AG04450 (cell line): ENCODE measurements at regions of chr17 and their contacts with region 1.

Region 1: GRCh38 chr17:64129764-64130558 is at the start of gene ERN1:
- DNase-seq: peak; percentile 82
- H3K4me3 ChIP-seq: peak within 1 kb of the TSS; percentile 68
- H3K27ac ChIP-seq: peak within 1 kb of the TSS; percentile 93
- H3K27me3 ChIP-seq: no peaks in the 10 kb centered on the region
- CTCF ChIP-seq: no peak
- polyA plus RNA-seq, gene ERN1: 4.5 and 4.7 TPM in 2 replicates

Region 2: DNA sequence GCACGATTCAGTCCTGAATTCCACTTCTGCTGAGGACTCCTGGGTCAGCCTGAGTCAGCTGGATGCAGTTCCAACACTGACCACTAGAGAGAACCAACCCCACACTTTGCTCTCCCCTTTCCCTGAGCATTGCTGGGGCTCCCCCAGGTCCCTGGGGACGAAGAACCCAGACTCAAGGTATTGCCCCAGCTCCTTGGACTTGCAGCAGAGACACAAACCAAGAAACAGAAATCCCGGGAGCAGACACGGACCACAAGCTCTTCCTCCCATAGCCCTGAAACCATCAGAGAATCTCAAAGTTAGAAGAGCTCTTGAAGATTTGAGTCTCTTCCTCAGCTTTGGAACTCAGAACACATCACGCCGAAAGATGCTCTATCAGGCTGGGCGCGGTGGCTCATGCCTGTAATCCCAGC is 210.6 kb before region 1 on chr17:
- CTCF ChIA-PET with region 1: interaction called, 34 read pairs
- POLR2A ChIA-PET with region 1: no interaction called
- DNase-seq: peak; percentile 15
- H3K4me3 ChIP-seq: no peak overlapping the region
- H3K27ac ChIP-seq: no peak overlapping the region
- H3K27me3 ChIP-seq: peaks cover 20% of the 10 kb centered on the region
- CTCF ChIP-seq: peak; percentile 94

Region 3: DNA sequence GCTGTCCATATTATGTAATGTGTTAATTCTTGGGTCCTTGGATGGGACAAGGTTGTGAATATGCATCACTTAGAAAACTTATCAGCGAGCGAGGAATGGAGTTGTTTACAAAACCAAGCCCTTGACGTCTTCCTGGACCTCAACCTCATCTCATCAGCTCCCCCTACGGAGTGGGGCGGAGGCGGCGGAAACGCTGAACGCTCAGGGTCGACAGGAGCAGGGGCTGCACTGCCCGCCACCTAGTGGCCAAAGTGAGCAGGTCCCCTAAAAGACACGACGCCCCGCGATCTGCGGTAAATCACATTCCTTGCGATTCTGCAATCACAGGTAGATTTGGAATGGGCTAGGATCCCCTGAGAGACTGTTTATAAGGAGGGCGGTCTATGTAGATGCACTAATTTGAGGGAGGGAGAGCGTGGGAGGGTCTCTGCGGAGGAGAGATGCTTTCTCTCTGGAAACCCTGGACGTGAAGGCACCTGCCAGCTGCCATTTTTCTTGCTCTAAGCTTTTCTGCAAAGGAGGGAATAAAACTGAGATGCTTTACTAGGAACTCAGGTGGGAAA is 104.1 kb before region 1 on chr17:
- CTCF ChIA-PET with region 1: interaction called, 698 read pairs
- POLR2A ChIA-PET with region 1: interaction called, 11 read pairs
- DNase-seq: peak; percentile 33
- H3K4me3 ChIP-seq: no peak overlapping the region
- H3K27ac ChIP-seq: no peak overlapping the region
- H3K27me3 ChIP-seq: peaks cover 2% of the 10 kb centered on the region
- CTCF ChIP-seq: peak; percentile 93

Region 4: GRCh38 chr17:64056269-64057005 is 73.5 kb before region 1 on chr17:
- CTCF ChIA-PET with region 1: interaction called, 92 read pairs
- POLR2A ChIA-PET with region 1: no interaction called
- DNase-seq: no peak
- H3K4me3 ChIP-seq: no peak overlapping the region
- H3K27ac ChIP-seq: no peak overlapping the region
- H3K27me3 ChIP-seq: no peaks in the 10 kb centered on the region
- CTCF ChIP-seq: no peak

Region 5: GRCh38 chr17:64117981-64118979 is 11.7 kb before region 1 on chr17:
- CTCF ChIA-PET with region 1: interaction called, 10 read pairs
- POLR2A ChIA-PET with region 1: interaction called, 16 read pairs
- DNase-seq: no peak
- H3K4me3 ChIP-seq: no peak overlapping the region
- H3K27ac ChIP-seq: no peak overlapping the region
- H3K27me3 ChIP-seq: no peaks in the 10 kb centered on the region
- CTCF ChIP-seq: no peak

Region 6: DNA sequence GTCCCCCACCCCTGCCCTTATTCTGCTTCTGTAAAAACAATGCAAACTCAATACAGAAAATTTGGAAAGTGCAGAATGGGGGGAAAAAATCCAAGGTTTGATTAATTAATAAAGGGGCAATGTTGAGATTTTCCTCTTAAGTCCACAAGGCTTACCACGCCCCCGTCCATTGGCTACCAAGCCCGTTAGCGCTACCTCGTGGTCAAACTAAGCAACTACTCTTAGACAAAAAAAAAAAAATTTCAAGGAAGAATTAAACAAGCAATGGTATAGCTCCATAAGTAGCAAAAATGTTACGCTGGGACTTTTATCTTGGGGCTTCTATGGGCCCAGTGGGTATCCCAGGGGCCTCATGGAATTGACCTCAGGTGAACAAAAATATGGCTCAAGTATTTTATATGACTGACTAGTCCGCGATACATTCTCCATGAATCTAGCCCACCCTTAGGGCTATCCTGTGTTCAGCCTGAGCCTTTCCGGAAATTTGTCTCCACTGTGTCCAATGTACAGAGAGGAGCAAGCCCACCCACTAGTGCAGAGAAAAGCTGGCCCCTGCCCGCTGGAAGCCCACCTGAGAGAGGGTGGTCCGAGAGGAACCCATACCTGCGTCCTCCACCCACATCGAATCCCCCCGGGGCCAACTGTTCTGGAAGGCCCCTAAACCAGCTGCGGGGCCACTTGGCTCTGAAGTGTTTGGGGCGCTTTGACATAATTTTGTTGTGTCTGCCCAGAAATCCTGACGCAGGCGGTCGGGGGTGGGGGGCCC is 152.2 kb after region 1 on chr17:
- CTCF ChIA-PET with region 1: interaction called, 34 read pairs
- POLR2A ChIA-PET with region 1: no interaction called
- DNase-seq: peak; percentile 61
- H3K4me3 ChIP-seq: no peak overlapping the region
- H3K27ac ChIP-seq: no peak overlapping the region
- H3K27me3 ChIP-seq: peaks cover 5% of the 10 kb centered on the region
- CTCF ChIP-seq: peak; percentile 84